ENCODE measurements at regions of chr11 and their contacts with region 1.

Region 1: DNA sequence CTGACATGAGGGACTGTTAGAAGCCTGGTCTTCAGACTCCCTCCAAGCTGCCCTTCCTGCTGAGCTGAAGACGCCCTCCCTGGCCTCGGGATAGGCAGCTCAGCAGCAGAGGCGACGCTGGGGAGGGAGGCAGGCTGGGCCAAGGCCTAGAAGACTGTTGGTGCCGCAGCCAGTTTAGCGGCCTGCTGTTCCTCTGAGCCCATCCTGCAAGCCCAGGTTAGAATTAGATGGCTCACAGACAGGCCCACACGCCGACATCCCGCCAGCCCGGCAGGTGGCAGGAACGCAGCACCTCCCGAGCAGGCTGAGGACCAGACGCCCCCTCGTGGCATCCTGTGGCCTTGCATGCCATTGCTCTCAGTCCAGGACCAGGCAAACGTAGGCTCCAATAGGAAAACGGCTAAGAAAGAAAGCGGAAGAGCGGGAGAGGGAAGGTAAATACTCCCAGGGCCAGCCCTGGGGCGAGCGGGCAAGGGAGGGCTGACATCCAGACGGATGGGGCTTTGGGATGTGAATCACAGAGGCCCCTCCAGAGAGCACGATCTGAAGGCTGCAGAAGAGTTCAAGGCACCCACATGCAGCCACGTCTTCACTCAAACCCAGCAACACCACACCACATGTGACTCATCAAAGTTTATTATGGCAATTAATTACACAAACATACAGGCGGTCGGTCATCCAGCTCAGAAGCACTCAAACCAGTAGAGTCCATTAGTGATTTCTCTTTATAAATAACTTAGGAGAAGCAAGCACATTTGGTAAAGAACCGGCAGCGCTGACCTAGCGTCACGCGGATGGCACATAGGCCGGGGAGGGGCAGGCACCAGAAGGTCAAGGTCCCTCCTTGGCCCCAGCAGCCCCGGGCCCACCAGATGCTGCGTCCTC is 27.6 kb downstream of the CD5 start:
- DNase-seq: peak; percentile 83 to 94 (median 89)
- H3K4me3 ChIP-seq: peak overlapping the region in 18 of 59 donors; percentile 5 to 44 (median 28)
- H3K27ac ChIP-seq: peak overlapping the region in 35 of 59 donors; percentile 0 to 77 (median 49)
- H3K27me3 ChIP-seq: no peaks in the 10 kb centered on the region
- CTCF ChIP-seq: peak; percentile 89 to 100 (median 99)

Region 2: DNA sequence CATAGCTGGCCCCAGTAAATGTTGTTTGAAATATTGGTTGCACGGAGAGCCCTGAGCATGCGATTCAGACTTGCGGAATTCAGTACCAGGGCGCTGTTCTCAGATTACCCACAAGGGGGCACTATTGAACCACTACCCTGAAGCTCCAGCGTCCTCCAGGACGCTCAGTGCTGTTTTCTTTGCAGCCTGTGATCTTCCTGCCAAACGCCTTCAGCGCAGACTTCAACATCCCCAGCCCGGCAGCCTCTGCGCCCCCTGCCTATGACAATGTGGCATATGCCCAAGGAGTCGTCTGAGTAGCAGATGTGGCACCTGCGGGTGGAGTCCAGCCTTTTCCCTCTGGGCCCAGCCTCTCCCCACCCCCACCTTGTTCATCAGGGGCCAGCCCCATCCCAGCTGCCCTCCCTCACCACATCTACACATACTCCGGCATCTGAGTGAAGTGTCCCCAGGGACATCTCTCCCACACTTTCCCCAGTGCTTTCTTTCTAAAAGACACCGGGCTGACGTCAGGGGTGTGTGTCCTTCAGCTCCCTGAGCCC is 354.4 kb before region 1 on chr11:
- intact Hi-C with region 1: loop called in 1 of 2 experiments (anchors 10 kb)
- DNase-seq: peak; percentile 43 to 90 (median 82)
- H3K4me3 ChIP-seq: peak overlapping the region in 13 of 59 donors; percentile 0 to 28 (median 24)
- H3K27ac ChIP-seq: peak overlapping the region in 14 of 59 donors; percentile 24 to 72 (median 47)
- H3K27me3 ChIP-seq: peaks cover 0 to 3% (median 0%) of the 10 kb centered on the region in 45 donors
- CTCF ChIP-seq: peak; percentile 75 to 98 (median 92)

Region 3: DNA sequence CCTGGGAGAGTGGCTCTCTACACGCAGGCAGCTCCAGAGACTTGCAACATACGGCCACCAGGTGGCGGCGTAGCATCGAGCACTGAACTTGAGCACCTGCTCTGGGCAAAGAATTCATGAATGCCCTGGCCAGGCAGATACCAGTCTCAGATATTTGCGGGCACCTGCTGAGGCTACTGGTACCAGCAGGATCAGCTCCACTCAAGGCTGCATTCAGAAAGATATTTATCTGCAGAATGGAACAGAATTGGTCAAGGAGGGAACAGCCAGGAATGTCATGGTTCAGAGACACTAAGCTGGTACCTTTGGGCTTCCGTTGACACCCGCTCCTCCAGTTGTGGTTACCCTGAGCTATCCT is 298.8 kb before region 1 on chr11:
- intact Hi-C with region 1: loop called in 1 of 2 experiments (anchors 2 kb)
- DNase-seq: peak; percentile 83 to 93 (median 90)
- H3K4me3 ChIP-seq: peak overlapping the region in 16 of 59 donors; percentile 16 to 46 (median 26)
- H3K27ac ChIP-seq: peak overlapping the region in 1 of 59 donors; percentile 47
- H3K27me3 ChIP-seq: no peaks in the 10 kb centered on the region
- CTCF ChIP-seq: peak; percentile 91 to 100 (median 98)

Region 4: GRCh38 chr11:60899046-60899936 is 230.6 kb before region 1 on chr11:
- intact Hi-C with region 1: loop called in 1 of 2 experiments (anchors 5 kb)
- DNase-seq: peak in 1 of 10 donors; percentile 52
- H3K4me3 ChIP-seq: no peak overlapping the region
- H3K27ac ChIP-seq: peak overlapping the region in 5 of 59 donors; percentile 14 to 44 (median 29)
- H3K27me3 ChIP-seq: no peaks in the 10 kb centered on the region
- CTCF ChIP-seq: peak; percentile 80 to 99 (median 93)

Region 5: DNA sequence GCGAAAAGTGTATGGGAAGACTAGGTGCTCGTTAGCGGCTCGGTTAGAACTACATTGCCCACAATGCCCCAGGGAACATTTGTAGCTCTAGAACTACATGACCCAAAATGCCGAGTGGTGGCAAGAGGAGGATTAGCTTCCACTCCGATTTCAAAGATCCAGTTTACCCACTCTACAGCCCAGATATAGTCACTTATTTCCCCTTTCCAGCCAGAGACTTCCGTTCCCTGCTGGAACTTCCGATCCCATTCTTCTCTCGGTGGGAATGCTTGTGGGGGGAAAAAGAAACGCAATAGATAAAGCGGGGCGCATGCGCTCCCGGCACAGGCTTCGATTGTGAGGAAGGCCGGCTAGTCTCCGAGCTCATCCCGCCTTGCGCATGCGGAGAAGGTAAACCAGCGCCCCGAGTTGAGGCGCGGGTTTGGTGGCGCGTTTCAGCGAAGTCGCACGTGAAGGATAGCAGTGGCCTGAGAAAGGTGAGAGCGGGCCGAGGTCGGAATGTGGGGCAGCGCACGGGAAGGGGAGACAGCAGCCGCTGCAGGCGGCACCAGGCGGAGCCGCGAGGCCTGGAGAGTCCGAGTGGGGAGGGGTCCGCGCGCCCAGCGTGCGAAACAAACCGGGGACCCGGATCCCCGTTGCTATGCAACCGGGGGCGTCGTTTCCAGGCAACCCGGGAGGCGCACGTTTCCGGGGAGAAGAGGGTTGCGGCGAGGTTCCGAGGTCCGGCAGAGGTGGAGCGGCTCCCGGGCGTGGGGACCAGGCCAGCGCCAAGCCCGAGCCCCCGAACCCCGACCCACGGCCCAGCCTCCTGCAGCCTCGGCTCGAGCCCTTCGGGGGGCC is 215.9 kb before region 1 on chr11 and contains the start of gene TMEM109:
- intact Hi-C with region 1: loop called in 1 of 2 experiments (anchors 1 kb)
- DNase-seq: peak; percentile 85 to 91 (median 90)
- H3K4me3 ChIP-seq: peak within 1 kb of the TSS; percentile 57 to 100 (median 92)
- H3K27ac ChIP-seq: peak within 1 kb of the TSS; percentile 80 to 100 (median 98)
- H3K27me3 ChIP-seq: no peaks in the 10 kb centered on the region
- CTCF ChIP-seq: peak in 34 of 56 donors; percentile 10 to 56 (median 24)
- total RNA-seq, gene TMEM109: 30.8 to 53.0 (median 40.0) TPM

Region 6: DNA sequence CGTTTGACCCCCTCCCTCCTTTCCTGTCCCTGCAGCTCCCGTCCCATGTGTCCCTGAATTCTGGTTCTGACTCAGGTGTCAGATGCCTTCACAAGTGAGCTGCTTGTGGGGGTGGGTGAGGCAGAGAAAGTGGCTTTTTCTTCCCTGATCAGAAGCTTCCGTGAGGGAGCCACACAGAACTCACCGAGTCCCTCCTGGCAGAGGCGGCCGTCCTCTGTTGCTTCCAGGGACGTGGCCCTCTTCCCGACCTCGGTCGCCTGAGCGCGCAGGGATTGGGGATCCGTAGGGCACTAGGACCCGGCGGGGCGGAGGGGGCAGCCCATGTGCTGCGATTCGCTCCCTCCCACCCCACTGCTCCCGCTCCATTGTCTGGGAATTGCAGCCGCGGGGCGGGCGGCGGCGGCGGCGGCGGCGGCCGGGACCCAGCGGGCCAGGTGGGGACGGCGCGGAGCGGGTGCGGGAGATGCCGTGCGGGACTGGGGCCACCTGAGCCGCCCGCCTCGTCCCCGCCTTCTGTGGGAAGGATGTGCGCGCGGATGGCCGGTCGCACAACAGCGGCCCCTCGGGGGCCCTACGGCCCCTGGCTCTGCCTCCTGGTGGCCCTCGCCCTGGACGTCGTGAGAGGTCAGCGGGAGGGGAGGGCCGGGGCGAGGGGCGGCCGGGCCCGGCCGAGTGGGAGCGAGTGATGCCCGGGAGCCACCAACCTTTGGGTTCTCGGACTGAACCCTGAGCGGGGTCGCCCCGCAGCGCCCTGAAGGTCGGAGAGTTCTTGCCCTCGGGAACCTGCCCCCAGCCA is 205.6 kb before region 1 on chr11 and contains the start of gene TMEM132A:
- intact Hi-C with region 1: loop called in 1 of 2 experiments (anchors 5 kb)
- DNase-seq: peak; percentile 77 to 93 (median 89)
- H3K4me3 ChIP-seq: peak within 1 kb of the TSS; percentile 44 to 93 (median 81)
- H3K27ac ChIP-seq: peak within 1 kb of the TSS in 55 of 59 donors; percentile 7 to 94 (median 76)
- H3K27me3 ChIP-seq: no peaks in the 10 kb centered on the region
- CTCF ChIP-seq: peak in 8 of 56 donors; percentile 10 to 24 (median 14)
- total RNA-seq, gene TMEM132A: 98.1 to 297 (median 159) TPM

Region 7: GRCh38 chr11:61187505-61188130 is 57.7 kb after region 1 on chr11:
- intact Hi-C with region 1: loop called in 1 of 2 experiments (anchors 5 kb)
- DNase-seq: peak in 9 of 10 donors; percentile 53 to 82 (median 65)
- H3K4me3 ChIP-seq: no peak overlapping the region
- H3K27ac ChIP-seq: no peak overlapping the region
- H3K27me3 ChIP-seq: peaks cover 0 to 4% (median 0%) of the 10 kb centered on the region in 45 donors
- CTCF ChIP-seq: peak; percentile 82 to 98 (median 93)

Measured in dorsolateral prefrontal cortex (tissue), 120 donors.